Heart left ventricle (tissue), 16 donors: ENCODE measurements at regions of chr3 and their contacts with region 1.

Region 1: DNA sequence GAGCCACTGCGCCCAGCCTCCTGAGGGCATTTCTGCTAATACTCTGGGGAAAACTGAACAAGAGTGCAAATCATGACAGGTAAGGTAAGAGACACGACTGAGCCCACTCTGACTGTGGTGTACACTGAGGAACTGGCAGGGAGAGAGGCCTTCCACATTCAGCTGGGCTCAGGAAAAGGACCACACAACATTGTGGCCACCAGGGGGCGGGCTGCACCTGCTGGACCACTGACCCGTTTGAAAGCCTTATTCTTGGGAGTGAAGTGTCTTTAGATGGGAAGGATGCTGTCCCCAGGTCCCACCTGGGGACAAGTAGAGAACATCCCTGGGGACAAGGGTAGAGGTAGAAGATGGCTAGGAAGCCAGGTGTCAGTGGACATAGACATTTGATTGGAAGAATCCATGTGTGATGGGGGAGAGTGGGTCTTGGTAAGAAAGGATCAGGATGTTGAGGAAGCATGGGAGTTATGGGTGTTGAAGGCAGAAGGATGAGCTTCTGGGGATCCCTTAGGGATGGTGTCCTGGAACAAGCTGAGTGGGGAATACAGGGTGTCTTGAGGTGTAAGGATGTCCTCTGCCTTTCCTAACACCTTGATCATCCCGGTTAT is 6.2 kb upstream of the CTDSPL start:
- DNase-seq: peak; percentile 83 to 91 (median 86)
- ATAC-seq: peak; percentile 23 to 62 (median 49)
- H3K4me3 ChIP-seq: no peak overlapping the region
- H3K27ac ChIP-seq: peak overlapping the region in 1 of 12 donors; percentile 51
- H3K4me1 ChIP-seq: peaks cover 0 to 25% (median 11%) of the 10 kb centered on the region in 12 donors
- H3K27me3 ChIP-seq: no peaks in the 10 kb centered on the region
- CTCF ChIP-seq: peak; percentile 84 to 99 (median 94)
- POLR2A ChIP-seq: no peak

Region 2: GRCh38 chr3:37498126-37499039 is 357.1 kb before region 1 on chr3:
- intact Hi-C with region 1: no loop called
- DNase-seq: peak in 2 of 5 donors; percentile 55 to 73
- ATAC-seq: peak; percentile 69 to 79 (median 76)
- H3K4me3 ChIP-seq: no peak overlapping the region
- H3K27ac ChIP-seq: peak overlapping the region in 10 of 12 donors; percentile 6 to 81 (median 56)
- H3K4me1 ChIP-seq: peaks cover under 1 to 72% (median 43%) of the 10 kb centered on the region in 12 donors
- H3K27me3 ChIP-seq: no peaks in the 10 kb centered on the region
- CTCF ChIP-seq: no peak
- POLR2A ChIP-seq: peak in 1 of 2 donors; percentile 17

Region 3: GRCh38 chr3:37800022-37800551 is 55.4 kb before region 1 on chr3:
- intact Hi-C with region 1: no loop called
- DNase-seq: no peak
- ATAC-seq: no peak
- H3K4me3 ChIP-seq: no peak overlapping the region
- H3K27ac ChIP-seq: peak overlapping the region in 1 of 12 donors; percentile 30
- H3K4me1 ChIP-seq: peaks cover 0 to 4% (median 0%) of the 10 kb centered on the region in 12 donors
- H3K27me3 ChIP-seq: no peaks in the 10 kb centered on the region
- CTCF ChIP-seq: no peak
- POLR2A ChIP-seq: no peak

Region 4: DNA sequence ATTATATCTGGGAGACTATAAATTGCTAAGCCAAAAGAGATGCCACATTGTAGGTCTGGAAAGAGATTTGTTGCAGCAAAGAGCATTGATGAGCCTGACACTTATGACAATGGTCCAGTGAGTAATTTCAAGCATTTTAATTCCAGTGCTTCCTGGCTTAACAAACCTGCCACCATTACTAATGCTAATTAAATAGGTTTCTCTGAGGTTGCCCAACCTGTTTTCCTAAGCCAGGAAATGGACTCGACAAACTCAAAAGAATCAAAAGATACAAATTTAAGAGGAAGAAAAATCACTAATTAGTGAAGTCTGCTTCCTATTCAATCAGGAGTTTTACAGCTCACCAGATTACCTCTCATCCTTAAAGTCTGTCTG is 30.5 kb before region 1 on chr3:
- intact Hi-C with region 1: no loop called
- DNase-seq: no peak
- ATAC-seq: no peak
- H3K4me3 ChIP-seq: no peak overlapping the region
- H3K27ac ChIP-seq: peak overlapping the region in 3 of 12 donors; percentile 0 to 57 (median 25)
- H3K4me1 ChIP-seq: peaks cover 0 to 40% (median 15%) of the 10 kb centered on the region in 12 donors
- H3K27me3 ChIP-seq: no peaks in the 10 kb centered on the region
- CTCF ChIP-seq: no peak
- POLR2A ChIP-seq: no peak

Region 5: DNA sequence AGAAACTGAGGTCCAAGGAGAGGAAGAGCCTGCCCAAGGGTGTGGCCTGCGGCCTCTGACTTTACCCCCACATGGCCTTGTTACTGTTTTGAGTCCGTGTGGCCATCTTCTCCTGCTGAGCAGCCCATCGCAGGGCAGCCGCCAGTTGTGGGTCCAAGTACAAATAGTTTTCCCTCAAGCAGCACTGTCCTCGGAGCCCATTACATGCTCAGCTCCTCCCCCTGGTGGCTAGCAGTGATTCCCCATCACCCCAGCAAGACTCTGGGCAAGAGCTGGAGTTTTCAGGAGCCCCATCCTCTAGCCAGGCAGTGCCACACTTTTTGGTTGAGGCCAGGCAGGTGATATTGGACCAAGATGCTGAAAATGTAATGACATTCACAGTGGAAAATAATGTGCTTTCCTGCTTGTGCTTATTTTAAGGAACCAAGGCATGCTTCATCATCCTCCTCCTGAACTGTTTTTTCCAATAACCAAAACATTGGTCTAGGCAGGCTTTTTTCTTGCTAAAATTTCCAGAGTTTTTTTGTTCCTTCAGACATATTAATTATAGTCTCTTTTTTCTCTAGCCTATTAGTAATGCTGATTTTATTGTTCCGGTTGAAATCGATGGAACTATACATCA is 111.9 kb after region 1 on chr3:
- intact Hi-C with region 1: loop called (anchors 1 to 2 kb)
- DNase-seq: peak in 4 of 5 donors; percentile 62 to 76 (median 70)
- ATAC-seq: peak; percentile 65 to 86 (median 76)
- H3K4me3 ChIP-seq: no peak overlapping the region
- H3K27ac ChIP-seq: peak overlapping the region in 4 of 12 donors; percentile 60 to 77 (median 73)
- H3K4me1 ChIP-seq: peaks cover 0 to 49% (median 31%) of the 10 kb centered on the region in 12 donors
- H3K27me3 ChIP-seq: no peaks in the 10 kb centered on the region
- CTCF ChIP-seq: peak; percentile 72 to 90 (median 83)
- POLR2A ChIP-seq: no peak

Region 6: DNA sequence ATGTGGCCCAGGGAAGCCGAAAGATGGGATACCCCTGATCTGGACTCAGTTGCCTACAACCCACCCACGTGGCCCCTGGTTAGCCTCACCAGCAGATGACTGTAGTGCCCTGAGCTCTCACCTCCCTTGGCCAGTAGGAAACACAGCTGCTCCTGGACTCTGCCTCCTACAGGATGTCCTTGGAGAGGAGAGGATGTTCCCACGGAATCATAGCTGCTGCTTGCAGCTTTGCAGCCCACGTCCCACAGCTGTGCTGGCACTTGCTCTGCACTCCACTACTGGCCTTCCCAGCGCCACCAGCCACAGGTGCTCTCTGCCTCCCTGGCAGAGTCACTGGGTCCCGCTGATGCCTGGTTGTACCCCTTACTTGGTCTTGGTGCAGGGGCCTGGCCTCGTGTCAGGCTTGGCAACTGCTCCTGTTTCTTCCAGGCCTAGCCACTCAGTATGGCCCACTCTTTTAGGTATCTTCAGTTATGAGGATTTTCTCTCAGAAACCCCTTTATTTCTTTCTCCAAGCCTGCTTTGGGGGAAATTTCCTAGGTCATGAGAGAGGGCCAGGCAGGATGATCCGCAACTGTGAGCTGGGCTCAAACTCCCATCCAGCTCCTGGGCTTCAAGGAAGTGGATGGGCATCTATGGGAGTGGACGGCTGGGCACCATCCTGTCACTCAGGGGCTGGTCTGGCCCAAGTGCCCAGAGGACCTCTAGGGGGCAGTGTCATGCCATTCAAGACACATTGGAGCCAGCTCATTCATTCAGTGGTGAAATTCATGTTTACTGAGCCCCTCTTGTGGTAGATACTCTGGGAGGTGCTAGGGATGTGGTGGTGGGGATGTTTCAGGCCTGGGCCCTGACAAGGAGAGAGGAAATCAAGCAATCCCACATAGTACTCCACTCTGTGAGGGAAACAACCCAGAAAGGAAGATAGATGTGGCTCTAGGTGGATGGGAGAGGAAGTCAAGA is 118.9 kb after region 1 on chr3:
- intact Hi-C with region 1: loop called in 2 of 10 experiments (anchors 2 kb)
- DNase-seq: peak in 4 of 5 donors; percentile 59 to 73 (median 60)
- ATAC-seq: peak; percentile 45 to 90 (median 82)
- H3K4me3 ChIP-seq: no peak overlapping the region
- H3K27ac ChIP-seq: peak overlapping the region in 5 of 12 donors; percentile 29 to 62 (median 49)
- H3K4me1 ChIP-seq: peaks cover 0 to 23% (median 10%) of the 10 kb centered on the region in 12 donors
- H3K27me3 ChIP-seq: no peaks in the 10 kb centered on the region
- CTCF ChIP-seq: peak; percentile 69 to 85 (median 77)
- POLR2A ChIP-seq: no peak

Region 7: DNA sequence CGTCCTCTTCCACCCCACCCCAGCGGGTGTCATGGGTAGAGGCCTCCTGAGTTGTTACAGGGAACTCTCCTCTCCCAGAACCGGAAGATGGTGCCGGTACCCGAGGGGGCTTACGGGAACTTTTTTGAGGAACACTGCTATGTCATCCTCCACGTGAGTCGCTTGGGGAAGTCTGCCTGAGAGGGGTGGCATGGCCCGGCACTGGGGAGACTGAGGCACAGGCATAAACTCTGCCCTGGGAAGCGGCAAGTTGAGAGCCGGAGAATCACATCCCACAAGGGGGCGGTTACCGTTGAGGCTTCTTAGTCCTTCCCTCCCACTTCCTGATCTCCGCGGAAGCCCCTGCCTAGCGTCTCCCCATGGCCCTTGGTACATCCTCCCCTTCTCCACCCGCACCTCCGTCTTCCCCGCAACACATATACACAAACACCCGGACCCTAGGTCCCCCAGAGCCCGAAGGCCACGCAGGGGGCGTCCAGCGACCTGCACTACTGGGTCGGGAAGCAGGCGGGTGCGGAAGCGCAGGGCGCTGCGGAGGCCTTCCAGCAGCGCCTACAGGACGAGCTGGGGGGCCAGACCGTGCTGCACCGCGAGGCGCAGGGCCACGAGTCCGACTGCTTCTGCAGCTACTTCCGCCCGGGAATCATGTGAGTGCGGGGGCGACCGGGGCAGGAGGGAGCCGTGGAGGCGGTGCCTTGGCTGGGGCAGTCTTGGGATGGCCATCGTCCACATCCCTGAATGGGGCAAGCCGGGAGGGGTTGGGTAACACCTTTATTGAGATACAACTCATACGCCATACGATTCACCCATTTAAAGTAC is 138.6 kb after region 1 on chr3:
- intact Hi-C with region 1: loop called in 1 of 10 experiments (anchors 2 kb)
- DNase-seq: peak; percentile 82 to 91 (median 87)
- ATAC-seq: peak; percentile 17 to 71 (median 62)
- H3K4me3 ChIP-seq: peak overlapping the region; percentile 29 to 69 (median 65)
- H3K27ac ChIP-seq: peak overlapping the region; percentile 44 to 94 (median 81)
- H3K4me1 ChIP-seq: peaks cover 0 to 45% (median 20%) of the 10 kb centered on the region in 12 donors
- H3K27me3 ChIP-seq: no peaks in the 10 kb centered on the region
- CTCF ChIP-seq: peak in 5 of 12 donors; percentile 5 to 30 (median 23)
- POLR2A ChIP-seq: peak in 1 of 2 donors; percentile 45

Region 8: GRCh38 chr3:38004415-38005076 is 149.1 kb after region 1 on chr3:
- intact Hi-C with region 1: loop called in 2 of 10 experiments (anchors 2 to 10 kb)
- DNase-seq: peak in 4 of 5 donors; percentile 64 to 87 (median 77)
- ATAC-seq: peak; percentile 62 to 76 (median 67)
- H3K4me3 ChIP-seq: peak overlapping the region in 7 of 12 donors; percentile 20 to 57 (median 46)
- H3K27ac ChIP-seq: peak overlapping the region in 11 of 12 donors; percentile 1 to 86 (median 62)
- H3K4me1 ChIP-seq: peaks cover 0 to 20% (median 9%) of the 10 kb centered on the region in 12 donors
- H3K27me3 ChIP-seq: no peaks in the 10 kb centered on the region
- CTCF ChIP-seq: peak; percentile 50 to 74 (median 67)
- POLR2A ChIP-seq: no peak

Region 9: GRCh38 chr3:38108649-38109579 is 253.4 kb after region 1 on chr3:
- intact Hi-C with region 1: no loop called
- DNase-seq: peak in 1 of 5 donors; percentile 9
- ATAC-seq: peak in 2 of 4 donors; percentile 26 to 37
- H3K4me3 ChIP-seq: no peak overlapping the region
- H3K27ac ChIP-seq: no peak overlapping the region
- H3K4me1 ChIP-seq: peaks cover 0 to 7% (median 0%) of the 10 kb centered on the region in 12 donors
- H3K27me3 ChIP-seq: peaks cover 0 to 6% (median 0%) of the 10 kb centered on the region in 9 donors
- CTCF ChIP-seq: no peak
- POLR2A ChIP-seq: no peak